ENCODE measurements at regions of chr6 and their contacts with region 1.

Region 1: DNA sequence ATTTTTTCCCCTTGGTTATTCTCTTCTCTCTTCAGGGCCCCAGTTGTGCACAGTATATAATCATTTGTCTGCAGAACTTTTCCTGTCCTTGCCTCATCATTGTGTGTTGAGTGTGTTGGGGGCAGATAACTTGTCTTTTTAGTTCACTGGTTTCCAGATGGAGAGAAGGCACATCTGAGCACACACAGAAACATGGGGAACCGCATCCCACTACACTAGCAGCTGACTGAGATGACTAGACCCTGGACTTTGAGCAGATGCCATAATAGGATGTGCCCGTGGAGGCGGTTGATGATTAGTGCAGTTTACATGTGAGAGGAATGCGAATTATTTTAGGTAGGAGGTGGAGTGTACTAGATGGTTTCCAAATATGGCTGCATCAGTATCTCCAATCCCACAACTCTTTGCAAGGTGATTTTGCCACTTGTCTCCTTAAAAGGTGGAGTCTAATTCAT is 26.5 kb upstream of the SH3BGRL2 start:
- DNase-seq: peak; percentile 95
- ATAC-seq: peak; percentile 73
- H3K4me3 ChIP-seq: no peak overlapping the region
- H3K27ac ChIP-seq: peak overlapping the region; percentile 54
- H3K4me1 ChIP-seq: peaks cover 84% of the 10 kb centered on the region
- H3K27me3 ChIP-seq: no peaks in the 10 kb centered on the region
- CTCF ChIP-seq: no peak
- EP300 ChIP-seq: peak; percentile 21 to 73; a peak in 2 of 4 replicates
- POLR2A ChIP-seq: peak in 1 of 2 experiments; percentile 34; a peak in 1 of 4 replicates
- RAD21 ChIP-seq: no peak

Region 2: GRCh38 chr6:78947962-78948361 is 656.6 kb before region 1 on chr6:
- CTCF ChIA-PET with region 1: no interaction called
- POLR2A ChIA-PET with region 1: no interaction called
- in situ Hi-C with region 1: no loop called
- intact Hi-C with region 1: no loop called
- DNase-seq: no peak
- ATAC-seq: no peak
- H3K4me3 ChIP-seq: no peak overlapping the region
- H3K27ac ChIP-seq: no peak overlapping the region
- H3K4me1 ChIP-seq: no peaks in the 10 kb centered on the region
- H3K27me3 ChIP-seq: no peaks in the 10 kb centered on the region
- CTCF ChIP-seq: no peak
- EP300 ChIP-seq: no peak
- POLR2A ChIP-seq: no peak
- RAD21 ChIP-seq: no peak

Region 3: DNA sequence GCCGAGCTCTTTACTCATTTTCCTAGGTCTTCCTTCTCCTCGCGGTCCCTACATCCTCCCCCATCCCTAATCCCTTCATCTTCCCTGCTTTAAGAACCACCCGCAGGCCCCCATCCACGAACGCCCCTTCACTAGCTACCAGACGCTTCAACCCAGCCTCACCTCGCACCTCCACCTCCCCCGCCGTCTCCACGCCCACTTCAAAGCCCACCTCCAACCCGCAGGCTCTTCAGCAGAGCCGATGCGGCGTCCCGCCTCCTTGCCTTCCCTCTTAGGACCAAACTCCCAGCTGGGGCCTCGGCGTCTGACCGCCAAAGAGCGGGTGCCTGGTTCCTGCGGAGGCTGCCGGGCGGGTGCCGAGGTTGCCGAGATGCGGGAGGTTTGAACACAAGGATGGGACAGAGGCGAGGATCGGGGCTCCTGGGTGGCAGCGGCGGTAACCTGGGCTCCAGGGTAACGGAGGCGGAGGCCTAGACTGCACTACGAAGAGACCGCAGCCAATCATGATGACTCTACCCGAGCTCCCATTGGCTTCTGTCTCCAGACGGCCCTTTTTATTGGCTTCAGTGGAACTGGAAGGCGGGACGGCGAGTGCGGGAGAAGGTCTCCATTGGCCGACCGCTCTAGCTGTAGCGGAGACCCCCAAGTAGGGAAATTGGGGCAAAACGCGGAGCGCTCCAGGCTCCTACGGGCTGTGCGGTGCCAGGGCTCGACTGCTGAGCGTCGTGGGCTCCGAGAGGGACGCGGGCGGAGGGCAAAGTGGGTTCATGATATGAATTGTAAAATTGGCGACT is 67.5 kb before region 1 on chr6 and contains the start of gene LCA5:
- CTCF ChIA-PET with region 1: no interaction called
- POLR2A ChIA-PET with region 1: interaction called, 3 read pairs
- in situ Hi-C with region 1: no loop called
- intact Hi-C with region 1: loop called (anchors 5 kb)
- DNase-seq: peak; percentile 97
- ATAC-seq: peak; percentile 99
- H3K4me3 ChIP-seq: peak within 1 kb of the TSS; percentile 84 to 97 (median 95)
- H3K27ac ChIP-seq: peak within 1 kb of the TSS; percentile 64
- H3K4me1 ChIP-seq: peaks cover 43% of the 10 kb centered on the region
- H3K27me3 ChIP-seq: no peaks in the 10 kb centered on the region
- CTCF ChIP-seq: no peak
- EP300 ChIP-seq: 0 out of 4 replicates have a peak, but pooled peaks of 1 of the 2 experiments have one; percentile 22
- POLR2A ChIP-seq: peak; percentile 78 to 86
- RAD21 ChIP-seq: 0 out of 2 replicates have a peak, but pooled peaks have one; percentile 18
- total RNA-seq, gene LCA5: 4.6 and 7.7 TPM in 2 replicates

Region 4: GRCh38 chr6:79672631-79673111 is 68.1 kb after region 1 on chr6:
- CTCF ChIA-PET with region 1: no interaction called
- POLR2A ChIA-PET with region 1: no interaction called
- in situ Hi-C with region 1: no loop called
- intact Hi-C with region 1: loop called (anchors 2 kb)
- DNase-seq: peak; percentile 76
- ATAC-seq: peak; percentile 77
- H3K4me3 ChIP-seq: no peak overlapping the region
- H3K27ac ChIP-seq: peak overlapping the region; percentile 2
- H3K4me1 ChIP-seq: peaks cover 68% of the 10 kb centered on the region
- H3K27me3 ChIP-seq: no peaks in the 10 kb centered on the region
- CTCF ChIP-seq: peak; percentile 71
- EP300 ChIP-seq: peak in 1 of 2 experiments; percentile 62; a peak in 2 of 4 replicates
- POLR2A ChIP-seq: no peak
- RAD21 ChIP-seq: 0 out of 2 replicates have a peak, but pooled peaks have one; percentile 17

Measured in HepG2 (cell line).